ENCODE measurements at regions of chr17 and their contacts with region 1.

Region 1: GRCh38 chr17:45852535-45853297 is 8.0 kb downstream of the SPPL2C start:
- DNase-seq: peak; percentile 13 to 86
- H3K4me3 ChIP-seq: no peak overlapping the region
- H3K27ac ChIP-seq: no peak overlapping the region
- H3K4me1 ChIP-seq: 0 out of 7 replicates have a peak, but pooled peaks cover 0 to 3% (median 0%) of the 10 kb centered on the region in 4 experiments
- H3K27me3 ChIP-seq: peaks cover 0 to 4% (median 0%) of the 10 kb centered on the region in 4 experiments; a peak in 2 of 7 replicates
- CTCF ChIP-seq: peak; percentile 49 to 91 (median 87)
- EP300 ChIP-seq: no peak
- POLR2A ChIP-seq: no peak
- RAD21 ChIP-seq: peak; percentile 88 to 93

Region 2: DNA sequence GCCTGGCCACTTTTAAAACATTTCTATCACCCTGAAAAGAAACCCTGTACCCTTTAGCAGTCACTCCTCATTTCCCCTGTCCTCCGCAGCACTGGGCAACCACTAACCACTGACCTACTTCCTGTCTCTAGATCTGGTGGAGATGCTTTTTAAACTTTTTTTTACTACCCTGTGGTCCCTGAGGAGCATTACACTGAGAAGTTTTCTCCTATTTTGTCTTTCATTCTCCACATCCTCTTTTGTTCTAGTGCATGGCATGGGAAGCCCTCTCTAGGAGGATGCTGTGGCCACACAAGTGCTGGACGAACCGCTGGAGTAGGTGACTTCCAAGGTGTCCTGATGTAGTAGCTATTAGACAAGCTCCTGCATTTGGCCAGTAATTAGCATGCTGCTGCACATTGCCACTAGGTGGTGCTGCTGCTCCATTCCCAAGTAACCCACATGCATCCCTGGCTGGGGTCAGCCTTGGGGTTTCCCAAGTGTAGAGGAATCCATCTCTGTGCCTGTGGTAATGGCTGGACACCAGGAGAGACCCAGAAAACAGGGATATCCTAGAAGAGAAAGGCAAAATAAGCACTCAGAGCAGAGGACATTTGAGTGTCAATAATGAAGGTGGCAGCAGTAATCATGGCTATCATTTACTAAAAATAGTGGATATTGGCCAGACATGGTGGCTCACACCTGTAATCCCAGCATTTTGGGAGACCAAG is 212.4 kb before region 1 on chr17:
- CTCF ChIA-PET with region 1: interaction called, 18 read pairs
- POLR2A ChIA-PET with region 1: no interaction called
- DNase-seq: peak; percentile 57 to 89
- H3K4me3 ChIP-seq: no peak overlapping the region
- H3K27ac ChIP-seq: no peak overlapping the region
- H3K4me1 ChIP-seq: no peaks in the 10 kb centered on the region; a peak in 1 of 7 replicates
- H3K27me3 ChIP-seq: no peaks in the 10 kb centered on the region
- CTCF ChIP-seq: peak; percentile 93 to 99 (median 94)
- EP300 ChIP-seq: no peak
- POLR2A ChIP-seq: no peak
- RAD21 ChIP-seq: peak; percentile 97 to 98

Region 3: DNA sequence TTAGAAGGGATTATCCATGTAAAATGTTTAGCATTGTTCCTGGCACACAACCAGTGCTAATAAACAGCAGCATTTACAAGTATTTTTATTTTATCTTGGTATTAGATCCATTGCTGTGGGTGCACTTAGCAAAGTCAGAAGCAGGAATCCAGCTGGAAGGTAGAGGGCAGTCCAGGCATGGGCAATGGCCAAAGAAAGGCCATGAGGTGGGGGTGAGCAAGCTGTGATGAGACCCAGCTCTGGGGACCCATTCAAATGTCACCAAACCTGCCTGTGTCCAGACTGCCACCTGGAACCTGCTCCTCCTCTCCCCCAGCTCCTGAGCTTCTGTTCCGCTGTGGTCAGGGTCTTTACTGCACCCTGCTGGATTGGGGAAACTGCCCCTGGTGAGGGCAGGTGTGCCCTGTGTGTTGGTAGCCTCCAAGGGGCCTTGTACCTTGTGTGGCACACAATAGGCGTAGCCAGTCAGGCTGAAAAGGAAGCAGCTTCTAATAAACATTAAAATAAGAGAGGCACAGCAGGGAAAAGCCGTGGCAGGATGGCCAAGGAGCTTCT is 186.6 kb before region 1 on chr17:
- CTCF ChIA-PET with region 1: interaction called, 25 read pairs
- POLR2A ChIA-PET with region 1: no interaction called
- DNase-seq: no peak
- H3K4me3 ChIP-seq: no peak overlapping the region
- H3K27ac ChIP-seq: no peak overlapping the region
- H3K4me1 ChIP-seq: no peaks in the 10 kb centered on the region
- H3K27me3 ChIP-seq: no peaks in the 10 kb centered on the region; a peak in 3 of 7 replicates
- CTCF ChIP-seq: peak; percentile 54 to 65 (median 54)
- EP300 ChIP-seq: no peak
- POLR2A ChIP-seq: no peak
- RAD21 ChIP-seq: peak; percentile 78

Region 4: DNA sequence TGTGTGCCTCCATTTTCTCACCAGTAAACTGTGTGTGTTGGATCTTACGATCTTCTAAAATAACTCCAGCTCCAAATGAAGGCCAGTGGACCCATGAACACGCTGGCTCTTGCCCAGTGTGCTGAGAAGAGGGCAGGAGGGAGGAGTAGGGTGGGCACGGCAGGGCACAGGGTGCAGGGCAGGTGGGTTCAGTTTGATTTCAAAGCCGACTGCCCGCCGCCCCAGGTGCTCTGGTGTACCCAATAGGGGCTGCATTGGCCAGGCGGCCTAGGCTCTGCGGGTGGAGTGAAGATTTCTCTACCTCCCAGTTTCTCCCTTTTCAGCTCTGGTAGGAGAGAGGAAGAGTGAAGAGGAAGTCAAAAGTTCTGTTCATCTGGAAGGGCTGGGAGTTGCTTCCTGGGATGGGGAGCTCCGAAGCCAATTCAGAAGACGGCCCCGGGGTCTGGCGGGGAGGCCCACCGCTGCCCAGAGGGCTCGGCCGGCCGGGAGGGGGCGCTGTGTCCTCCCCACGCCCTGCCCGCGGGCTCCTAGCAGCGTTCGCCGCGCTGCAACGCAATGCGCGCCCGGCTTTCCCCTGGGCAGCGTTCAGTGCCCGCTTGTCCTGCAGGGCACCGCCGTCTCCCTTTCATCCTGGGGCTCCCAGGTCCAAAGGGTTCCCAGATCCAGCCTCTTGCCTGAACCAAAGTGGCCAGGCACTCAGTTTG is 69.7 kb before region 1 on chr17:
- CTCF ChIA-PET with region 1: interaction called, 25 read pairs
- POLR2A ChIA-PET with region 1: no interaction called
- DNase-seq: peak in 1 of 2 experiments; percentile 93
- H3K4me3 ChIP-seq: peak overlapping the region; percentile 48 to 96 (median 76)
- H3K27ac ChIP-seq: no peak overlapping the region
- H3K4me1 ChIP-seq: peaks cover 0 to 19% (median 6%) of the 10 kb centered on the region in 4 experiments; a peak in 6 of 7 replicates
- H3K27me3 ChIP-seq: peaks cover 12 to 57% (median 49%) of the 10 kb centered on the region in 4 experiments
- CTCF ChIP-seq: peak; percentile 81 to 90 (median 87)
- EP300 ChIP-seq: no peak
- POLR2A ChIP-seq: no peak
- RAD21 ChIP-seq: peak; percentile 48 to 67; a peak in 3 of 4 replicates

Region 5: GRCh38 chr17:45794840-45795239 is 57.9 kb before region 1 on chr17:
- CTCF ChIA-PET with region 1: interaction called, 14 read pairs
- POLR2A ChIA-PET with region 1: interaction called, 3 read pairs
- DNase-seq: no peak
- H3K4me3 ChIP-seq: no peak overlapping the region
- H3K27ac ChIP-seq: no peak overlapping the region
- H3K4me1 ChIP-seq: peaks cover 0 to 8% (median 3%) of the 10 kb centered on the region in 4 experiments; a peak in 3 of 7 replicates
- H3K27me3 ChIP-seq: peaks cover 0 to 5% (median 0%) of the 10 kb centered on the region in 4 experiments; a peak in 1 of 7 replicates
- CTCF ChIP-seq: peak; percentile 45 to 61 (median 49)
- EP300 ChIP-seq: no peak
- POLR2A ChIP-seq: no peak
- RAD21 ChIP-seq: peak; percentile 44 to 62; a peak in 3 of 4 replicates

Region 6: DNA sequence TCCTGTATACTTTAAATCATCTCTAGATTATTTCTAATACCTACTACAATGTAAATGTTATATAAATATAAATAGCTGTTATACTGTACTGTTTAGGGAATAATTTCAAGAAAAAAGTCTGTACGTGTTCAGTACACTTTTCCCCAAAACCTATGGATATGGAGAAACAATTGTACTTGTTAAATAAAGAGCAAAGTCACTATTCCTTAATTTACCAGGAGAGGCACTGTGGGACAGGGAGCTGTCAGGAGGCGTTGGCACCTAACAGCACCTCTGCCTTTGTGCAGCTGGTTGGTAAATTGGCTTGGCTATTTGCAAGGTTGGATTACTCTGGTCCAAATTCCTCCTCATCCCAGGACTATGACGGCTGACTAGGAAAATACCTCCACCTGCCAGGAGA is 40.6 kb before region 1 on chr17:
- CTCF ChIA-PET with region 1: interaction called, 12 read pairs
- POLR2A ChIA-PET with region 1: no interaction called
- DNase-seq: no peak
- H3K4me3 ChIP-seq: no peak overlapping the region
- H3K27ac ChIP-seq: no peak overlapping the region
- H3K4me1 ChIP-seq: peaks cover 0 to 3% (median 0%) of the 10 kb centered on the region in 4 experiments; a peak in 1 of 7 replicates
- H3K27me3 ChIP-seq: no peaks in the 10 kb centered on the region
- CTCF ChIP-seq: peak; percentile 34 to 48 (median 47); a peak in 3 of 4 replicates
- EP300 ChIP-seq: no peak
- POLR2A ChIP-seq: no peak
- RAD21 ChIP-seq: peak; percentile 25 to 45; a peak in 3 of 4 replicates

Region 7: DNA sequence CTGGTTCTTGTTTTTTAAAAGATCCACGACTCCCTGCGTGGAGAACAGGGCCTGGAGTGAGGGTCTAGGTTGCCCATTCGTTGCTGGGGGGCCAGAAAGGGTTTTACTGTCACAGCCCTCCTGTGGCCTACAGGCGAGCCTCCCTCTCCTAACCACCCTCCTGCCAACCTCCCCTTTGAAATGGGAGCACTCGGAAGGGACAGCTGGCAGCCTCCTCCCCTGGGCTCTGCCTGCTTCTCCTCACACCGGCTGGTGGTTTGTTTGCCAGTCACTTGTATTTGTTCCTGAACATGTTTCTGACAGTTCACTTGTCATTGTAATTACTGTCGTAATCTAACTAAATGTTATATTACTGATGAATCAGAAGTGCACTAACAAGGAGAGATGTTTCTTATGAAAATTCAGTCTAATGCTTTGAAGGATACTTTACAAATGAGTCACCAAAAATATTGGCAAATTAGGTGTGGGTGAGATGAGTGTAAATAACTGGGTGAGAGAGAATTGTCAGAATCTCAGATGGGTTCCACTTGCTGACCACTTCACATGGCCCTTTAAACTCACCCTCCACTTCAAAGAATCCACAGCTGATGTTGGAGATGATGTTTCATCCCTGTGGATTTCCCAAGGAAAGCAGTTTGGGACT is 10.7 kb before region 1 on chr17:
- CTCF ChIA-PET with region 1: interaction called, 137 read pairs
- POLR2A ChIA-PET with region 1: no interaction called
- DNase-seq: no peak
- H3K4me3 ChIP-seq: no peak overlapping the region
- H3K27ac ChIP-seq: no peak overlapping the region
- H3K4me1 ChIP-seq: peaks cover 0 to 2% (median under 1%) of the 10 kb centered on the region in 4 experiments; a peak in 2 of 7 replicates
- H3K27me3 ChIP-seq: no peaks in the 10 kb centered on the region
- CTCF ChIP-seq: no peak
- EP300 ChIP-seq: no peak
- POLR2A ChIP-seq: no peak
- RAD21 ChIP-seq: no peak

Region 8: DNA sequence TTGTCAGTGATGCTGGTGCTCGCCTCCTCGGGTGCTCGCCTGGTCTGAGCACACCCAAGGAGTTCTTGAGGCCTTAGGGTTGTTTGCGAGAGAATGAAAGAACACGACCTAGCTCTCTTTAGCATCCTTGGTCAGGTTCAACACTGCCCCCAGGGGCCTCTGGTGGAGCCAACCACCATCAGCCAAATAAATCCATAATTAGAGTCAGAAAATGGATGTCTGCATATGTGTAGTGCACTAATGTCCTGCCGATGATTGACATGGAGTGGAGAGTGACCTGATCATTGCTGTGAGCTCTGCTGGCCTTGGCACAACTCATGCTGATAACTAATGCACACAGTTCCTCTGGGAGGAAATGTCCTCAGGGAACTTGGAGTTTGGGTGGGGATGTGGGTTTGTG is 138.2 kb after region 1 on chr17:
- CTCF ChIA-PET with region 1: no interaction called
- POLR2A ChIA-PET with region 1: no interaction called
- DNase-seq: no peak
- H3K4me3 ChIP-seq: no peak overlapping the region
- H3K27ac ChIP-seq: no peak overlapping the region
- H3K4me1 ChIP-seq: peaks cover 0 to 9% (median 4%) of the 10 kb centered on the region in 4 experiments; a peak in 5 of 7 replicates
- H3K27me3 ChIP-seq: peaks cover 0 to 2% (median 0%) of the 10 kb centered on the region in 4 experiments; a peak in 1 of 7 replicates
- CTCF ChIP-seq: peak in 1 of 3 experiments; percentile 32; a peak in 1 of 4 replicates
- EP300 ChIP-seq: no peak
- POLR2A ChIP-seq: no peak
- RAD21 ChIP-seq: no peak

Measured in H1 (cell line).